ENCODE measurements at regions of chr2 and their contacts with region 1.

Region 1: GRCh38 chr2:101697124-101698013 is at the start of gene MAP4K4:
- DNase-seq: peak; percentile 81
- H3K4me3 Mint-ChIP-seq: no peak within 1 kb of the TSS
- H3K27ac Mint-ChIP-seq: peak within 1 kb of the TSS; percentile 86
- H3K4me1 Mint-ChIP-seq: peaks cover 31% of the 10 kb centered on the region
- H3K27me3 Mint-ChIP-seq: no peaks in the 10 kb centered on the region
- CTCF ChIP-seq: no peak
- total RNA-seq, gene MAP4K4: 136 and 151 TPM in 2 replicates

Region 2: DNA sequence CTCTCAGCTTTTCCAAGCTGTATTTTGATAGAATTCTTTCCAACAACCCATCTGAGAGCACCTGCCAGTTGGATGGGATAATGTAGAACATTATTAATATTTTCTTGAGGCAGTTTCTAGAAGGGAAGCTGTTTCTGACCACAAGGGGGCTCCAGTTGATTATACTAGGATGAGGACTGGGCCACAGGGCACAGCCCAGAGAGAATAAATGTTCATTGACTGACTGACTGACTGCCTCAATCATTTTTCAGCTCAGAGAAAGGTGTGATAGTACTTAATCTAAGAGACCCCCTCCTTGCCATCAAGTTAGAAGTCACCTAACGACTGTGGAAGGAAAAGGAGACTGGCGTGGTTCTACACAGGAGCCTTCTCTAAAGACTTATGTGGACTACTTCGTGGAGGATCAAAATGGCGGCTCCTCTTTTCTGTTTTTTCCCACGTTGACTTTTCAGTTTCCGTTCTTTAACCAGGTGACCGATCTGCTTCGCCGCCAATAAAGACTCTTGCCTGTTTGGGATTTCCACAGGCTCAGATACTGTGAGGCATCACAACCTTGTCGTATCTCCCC is 278.2 kb before region 1 on chr2:
- CTCF ChIA-PET with region 1: interaction called, 5 read pairs
- intact Hi-C with region 1: loop called (anchors 10 kb)
- DNase-seq: peak; percentile 67
- H3K4me3 Mint-ChIP-seq: no peak overlapping the region
- H3K27ac Mint-ChIP-seq: no peak overlapping the region
- H3K4me1 Mint-ChIP-seq: no peaks in the 10 kb centered on the region
- H3K27me3 Mint-ChIP-seq: no peaks in the 10 kb centered on the region
- CTCF ChIP-seq: peak; percentile 61

Region 3: GRCh38 chr2:101580528-101580927 is 116.8 kb before region 1 on chr2:
- CTCF ChIA-PET with region 1: no interaction called
- intact Hi-C with region 1: no loop called
- DNase-seq: no peak
- H3K4me3 Mint-ChIP-seq: no peak overlapping the region
- H3K27ac Mint-ChIP-seq: no peak overlapping the region
- H3K4me1 Mint-ChIP-seq: no peaks in the 10 kb centered on the region
- H3K27me3 Mint-ChIP-seq: peaks cover 8% of the 10 kb centered on the region
- CTCF ChIP-seq: no peak

Region 4: GRCh38 chr2:101630224-101630949 is 67.0 kb before region 1 on chr2:
- CTCF ChIA-PET with region 1: no interaction called
- intact Hi-C with region 1: loop called (anchors 5 kb)
- DNase-seq: peak; percentile 90
- H3K4me3 Mint-ChIP-seq: peak overlapping the region; percentile 13
- H3K27ac Mint-ChIP-seq: peak overlapping the region; percentile 82
- H3K4me1 Mint-ChIP-seq: peaks cover 29% of the 10 kb centered on the region
- H3K27me3 Mint-ChIP-seq: no peaks in the 10 kb centered on the region
- CTCF ChIP-seq: no peak

Region 5: GRCh38 chr2:101655702-101656422 is 41.5 kb before region 1 on chr2:
- CTCF ChIA-PET with region 1: no interaction called
- intact Hi-C with region 1: no loop called
- DNase-seq: no peak
- H3K4me3 Mint-ChIP-seq: no peak overlapping the region
- H3K27ac Mint-ChIP-seq: no peak overlapping the region
- H3K4me1 Mint-ChIP-seq: no peaks in the 10 kb centered on the region
- H3K27me3 Mint-ChIP-seq: no peaks in the 10 kb centered on the region
- CTCF ChIP-seq: no peak

Region 6: GRCh38 chr2:101736861-101737291 is 39.5 kb after region 1 on chr2:
- CTCF ChIA-PET with region 1: interaction called, 5 read pairs
- intact Hi-C with region 1: loop called (anchors 2 kb)
- DNase-seq: no peak
- H3K4me3 Mint-ChIP-seq: peak overlapping the region; percentile 45
- H3K27ac Mint-ChIP-seq: peak overlapping the region; percentile 77
- H3K4me1 Mint-ChIP-seq: peaks cover 65% of the 10 kb centered on the region
- H3K27me3 Mint-ChIP-seq: no peaks in the 10 kb centered on the region
- CTCF ChIP-seq: no peak

Region 7: DNA sequence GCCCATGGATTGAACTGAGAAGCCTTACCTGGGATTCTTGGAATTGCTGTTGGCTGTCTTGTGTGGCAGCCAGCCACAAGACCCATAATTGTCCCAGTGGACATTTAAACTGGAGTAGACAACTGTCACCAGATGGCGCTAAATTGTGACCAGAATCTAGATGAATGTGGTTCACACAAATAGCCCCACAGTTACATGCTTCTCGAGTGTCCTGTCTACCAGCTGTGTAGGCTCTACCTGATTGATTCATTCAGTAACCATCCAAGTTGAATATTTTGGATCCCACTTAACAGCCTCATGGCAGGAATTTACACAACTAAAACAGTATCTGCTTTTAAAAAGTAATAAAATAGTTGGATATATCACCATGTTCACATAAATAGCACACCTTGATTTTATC is 73.4 kb after region 1 on chr2:
- CTCF ChIA-PET with region 1: interaction called, 4 read pairs
- intact Hi-C with region 1: loop called (anchors 5 kb)
- DNase-seq: peak; percentile 51
- H3K4me3 Mint-ChIP-seq: no peak overlapping the region
- H3K27ac Mint-ChIP-seq: peak overlapping the region; percentile 61
- H3K4me1 Mint-ChIP-seq: peaks cover 58% of the 10 kb centered on the region
- H3K27me3 Mint-ChIP-seq: no peaks in the 10 kb centered on the region
- CTCF ChIP-seq: no peak

Region 8: DNA sequence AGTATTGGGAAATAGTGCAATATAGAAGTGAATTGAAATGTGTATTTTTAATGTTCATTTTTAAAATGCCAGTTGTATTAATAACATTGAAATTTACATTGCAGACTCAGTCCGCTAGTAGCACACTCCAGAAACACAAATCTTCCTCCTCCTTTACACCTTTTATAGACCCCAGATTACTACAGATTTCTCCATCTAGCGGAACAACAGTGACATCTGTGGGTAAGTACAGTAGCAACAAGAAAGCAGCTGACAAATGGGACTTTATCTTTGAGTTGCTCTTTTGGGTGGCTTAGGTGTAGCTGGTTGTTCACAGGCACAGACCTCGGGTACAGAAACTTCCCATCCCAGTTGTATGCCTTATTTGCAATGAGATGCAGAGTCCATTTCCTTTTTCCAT is 176.2 kb after region 1 on chr2:
- CTCF ChIA-PET with region 1: no interaction called
- intact Hi-C with region 1: no loop called
- DNase-seq: no peak
- H3K4me3 Mint-ChIP-seq: no peak overlapping the region
- H3K27ac Mint-ChIP-seq: no peak overlapping the region
- H3K4me1 Mint-ChIP-seq: no peaks in the 10 kb centered on the region
- H3K27me3 Mint-ChIP-seq: no peaks in the 10 kb centered on the region
- CTCF ChIP-seq: no peak